Astrocyte of the cerebellum (primary cell): ENCODE measurements at regions of chr7 and their contacts with region 1.

Region 1: GRCh38 chr7:73966943-73967831 is 60.8 kb upstream of the ELN start:
- DNase-seq: no peak
- H3K4me3 ChIP-seq: no peak overlapping the region
- CTCF ChIP-seq: no peak

Region 2: GRCh38 chr7:74002474-74003017 is 35.4 kb after region 1 on chr7:
- in situ Hi-C with region 1: loop called (anchors 5 kb)
- DNase-seq: peak; percentile 48
- H3K4me3 ChIP-seq: no peak overlapping the region
- CTCF ChIP-seq: no peak